A549 (cell line): ENCODE measurements at regions of chr1 and their contacts with region 1.

Region 1: DNA sequence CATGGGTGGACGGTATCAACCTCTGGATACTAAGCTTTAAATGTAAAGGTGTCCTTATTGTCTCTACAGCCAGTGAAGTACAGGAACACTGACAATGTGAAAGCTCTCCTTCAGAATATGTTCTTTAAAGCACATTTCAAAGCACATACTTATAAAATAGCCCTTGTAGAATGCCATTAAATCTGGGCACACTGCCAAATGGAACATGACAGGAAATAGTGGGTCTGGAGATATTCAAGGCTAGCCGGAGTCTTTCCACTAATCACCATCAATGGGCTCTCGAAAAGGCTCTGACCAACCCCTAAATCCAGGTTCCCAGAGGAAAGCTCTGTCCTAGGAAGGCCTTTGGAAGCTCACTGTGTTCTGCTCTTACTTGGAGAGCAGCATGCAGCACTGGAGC is 46.6 kb downstream of the PLD5 start:
- DNase-seq: no peak
- ATAC-seq: no peak
- H3K4me3 ChIP-seq: no peak overlapping the region
- H3K27ac ChIP-seq: no peak overlapping the region
- H3K4me1 ChIP-seq: no peaks in the 10 kb centered on the region
- CTCF ChIP-seq: no peak
- EP300 ChIP-seq: no peak
- POLR2A ChIP-seq: no peak
- RAD21 ChIP-seq: no peak

Region 2: GRCh38 chr1:242454262-242455045 is 23.5 kb before region 1 on chr1:
- CTCF ChIA-PET with region 1: interaction called, 11 read pairs
- POLR2A ChIA-PET with region 1: no interaction called
- DNase-seq: peak; percentile 54 to 63
- ATAC-seq: peak; percentile 85 to 94; a peak in 5 of 6 replicates
- H3K4me3 ChIP-seq: no peak overlapping the region
- H3K27ac ChIP-seq: peak overlapping the region; percentile 13 to 53; a peak in 3 of 6 replicates
- H3K4me1 ChIP-seq: no peaks in the 10 kb centered on the region; the same call in 2 of the 3 replicates
- CTCF ChIP-seq: peak; percentile 86
- EP300 ChIP-seq: no peak
- POLR2A ChIP-seq: no peak
- RAD21 ChIP-seq: peak; percentile 82 to 84

Region 3: GRCh38 chr1:242489545-242489944 is 11.6 kb after region 1 on chr1:
- CTCF ChIA-PET with region 1: no interaction called
- POLR2A ChIA-PET with region 1: no interaction called
- DNase-seq: no peak
- ATAC-seq: no peak
- H3K4me3 ChIP-seq: no peak overlapping the region
- H3K27ac ChIP-seq: no peak overlapping the region
- H3K4me1 ChIP-seq: no peaks in the 10 kb centered on the region
- CTCF ChIP-seq: no peak
- EP300 ChIP-seq: no peak
- POLR2A ChIP-seq: no peak
- RAD21 ChIP-seq: no peak

Region 4: DNA sequence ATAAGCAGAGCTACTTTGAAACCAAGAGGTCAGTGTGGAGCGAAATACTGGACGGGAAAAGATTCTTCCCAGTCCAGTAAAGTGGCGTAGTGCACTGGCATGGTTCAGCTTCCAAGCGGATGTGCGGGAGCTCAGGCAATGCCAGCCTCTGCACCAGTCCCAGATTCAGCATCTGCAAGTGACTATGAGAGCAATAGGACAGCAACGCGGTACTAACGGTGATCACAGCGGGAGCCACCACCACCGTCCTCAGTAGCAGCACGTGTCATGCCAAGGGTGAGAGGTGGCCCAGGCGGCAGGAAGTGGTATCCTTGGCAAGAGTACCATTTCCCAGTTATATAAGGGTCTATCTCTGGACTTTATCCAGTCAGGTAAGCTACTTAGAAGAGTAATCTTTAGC is 28.8 kb after region 1 on chr1:
- CTCF ChIA-PET with region 1: no interaction called
- POLR2A ChIA-PET with region 1: no interaction called
- DNase-seq: no peak
- ATAC-seq: no peak
- H3K4me3 ChIP-seq: no peak overlapping the region
- H3K27ac ChIP-seq: no peak overlapping the region
- H3K4me1 ChIP-seq: no peaks in the 10 kb centered on the region
- CTCF ChIP-seq: no peak
- EP300 ChIP-seq: no peak
- POLR2A ChIP-seq: no peak
- RAD21 ChIP-seq: no peak

Region 5: GRCh38 chr1:242605521-242605920 is 127.6 kb after region 1 on chr1:
- CTCF ChIA-PET with region 1: no interaction called
- POLR2A ChIA-PET with region 1: no interaction called
- DNase-seq: no peak
- ATAC-seq: no peak
- H3K4me3 ChIP-seq: no peak overlapping the region
- H3K27ac ChIP-seq: no peak overlapping the region
- H3K4me1 ChIP-seq: peaks cover 17% of the 10 kb centered on the region; the same call in 2 of the 3 replicates
- CTCF ChIP-seq: no peak
- EP300 ChIP-seq: no peak
- POLR2A ChIP-seq: no peak
- RAD21 ChIP-seq: no peak